ENCODE measurements at regions of chr5 and their contacts with region 1.

Region 1: DNA sequence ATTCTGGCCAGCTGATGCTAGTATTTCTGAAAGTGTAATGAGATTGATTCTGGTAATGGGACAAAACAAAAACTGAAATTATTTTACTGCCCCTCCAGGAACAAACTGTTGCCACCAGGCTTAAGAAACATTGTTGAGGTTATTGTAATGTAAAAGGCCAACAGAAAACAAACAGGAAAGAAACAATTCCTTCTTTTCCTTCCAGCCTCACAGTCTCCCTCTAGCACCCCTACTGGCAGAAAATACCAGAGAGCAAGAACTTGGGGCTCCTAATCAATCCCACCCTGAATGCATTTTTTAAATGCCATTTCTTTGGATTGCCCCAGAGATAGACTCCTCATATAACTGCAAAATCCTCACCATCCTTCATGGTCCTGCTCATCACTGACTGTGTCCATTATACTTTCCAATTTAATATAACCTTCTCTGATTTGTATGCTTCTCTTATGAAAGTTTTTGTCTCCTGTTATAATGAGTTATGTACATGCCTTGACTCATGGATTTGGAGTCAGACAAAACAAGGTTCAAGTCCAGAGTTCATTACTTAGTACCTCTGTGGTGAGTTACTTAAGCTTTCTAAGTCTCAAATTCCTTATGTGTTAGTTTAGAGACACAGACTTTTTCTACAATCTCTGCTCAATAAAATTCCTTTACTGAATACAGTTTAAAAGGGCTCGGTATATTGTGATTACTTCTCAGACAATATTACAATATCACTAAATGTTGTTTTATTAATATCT is 157.9 kb upstream of the FBN2 start:
- DNase-seq: no peak
- H3K4me3 ChIP-seq: no peak overlapping the region
- CTCF ChIP-seq: peak; percentile 35

Region 2: GRCh38 chr5:128750155-128750554 is 54.2 kb after region 1 on chr5:
- in situ Hi-C with region 1: loop called (anchors 5 kb)
- DNase-seq: no peak
- H3K4me3 ChIP-seq: no peak overlapping the region
- CTCF ChIP-seq: no peak